CD8-positive, alpha-beta T cell (primary cell): ENCODE measurements at regions of chrX and their contacts with region 1.

Region 1: DNA sequence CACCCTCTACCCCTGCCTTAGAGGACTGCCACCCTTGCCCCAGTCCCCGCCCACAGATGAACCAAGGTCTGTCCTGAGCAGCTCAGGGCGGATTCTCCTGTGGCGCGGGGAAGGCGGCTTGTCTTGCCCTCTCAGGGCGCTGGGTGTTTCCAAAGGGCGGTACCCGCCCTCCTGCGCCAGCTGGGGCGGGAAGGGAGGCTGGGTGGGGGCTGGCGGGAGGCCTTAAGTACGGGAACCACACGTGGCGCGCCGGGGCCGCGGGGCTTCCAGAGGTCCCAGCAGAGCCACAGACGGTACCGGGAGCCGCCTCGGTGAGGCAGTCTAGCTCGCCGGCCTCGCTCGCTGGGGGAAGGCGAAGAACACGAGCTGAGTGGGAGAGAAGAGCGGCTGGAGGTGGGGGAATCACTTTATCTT is 361.1 kb downstream of the MID1IP1 start:
- DNase-seq: peak in 6 of 9 experiments; percentile 17 to 55 (median 46)
- ATAC-seq: peak; percentile 85
- H3K4me3 ChIP-seq: no peak overlapping the region
- H3K4me3 Mint-ChIP-seq: peak overlapping the region; percentile 67
- H3K27ac ChIP-seq: no peak overlapping the region
- H3K27ac Mint-ChIP-seq: no peak overlapping the region
- H3K4me1 ChIP-seq: no peaks in the 10 kb centered on the region
- H3K4me1 Mint-ChIP-seq: peaks cover 4% of the 10 kb centered on the region
- H3K27me3 ChIP-seq: peaks cover 0 to 3% of the 10 kb centered on the region in 2 experiments
- H3K27me3 Mint-ChIP-seq: peaks cover 3% of the 10 kb centered on the region
- CTCF ChIP-seq: peak; percentile 33

Region 2: DNA sequence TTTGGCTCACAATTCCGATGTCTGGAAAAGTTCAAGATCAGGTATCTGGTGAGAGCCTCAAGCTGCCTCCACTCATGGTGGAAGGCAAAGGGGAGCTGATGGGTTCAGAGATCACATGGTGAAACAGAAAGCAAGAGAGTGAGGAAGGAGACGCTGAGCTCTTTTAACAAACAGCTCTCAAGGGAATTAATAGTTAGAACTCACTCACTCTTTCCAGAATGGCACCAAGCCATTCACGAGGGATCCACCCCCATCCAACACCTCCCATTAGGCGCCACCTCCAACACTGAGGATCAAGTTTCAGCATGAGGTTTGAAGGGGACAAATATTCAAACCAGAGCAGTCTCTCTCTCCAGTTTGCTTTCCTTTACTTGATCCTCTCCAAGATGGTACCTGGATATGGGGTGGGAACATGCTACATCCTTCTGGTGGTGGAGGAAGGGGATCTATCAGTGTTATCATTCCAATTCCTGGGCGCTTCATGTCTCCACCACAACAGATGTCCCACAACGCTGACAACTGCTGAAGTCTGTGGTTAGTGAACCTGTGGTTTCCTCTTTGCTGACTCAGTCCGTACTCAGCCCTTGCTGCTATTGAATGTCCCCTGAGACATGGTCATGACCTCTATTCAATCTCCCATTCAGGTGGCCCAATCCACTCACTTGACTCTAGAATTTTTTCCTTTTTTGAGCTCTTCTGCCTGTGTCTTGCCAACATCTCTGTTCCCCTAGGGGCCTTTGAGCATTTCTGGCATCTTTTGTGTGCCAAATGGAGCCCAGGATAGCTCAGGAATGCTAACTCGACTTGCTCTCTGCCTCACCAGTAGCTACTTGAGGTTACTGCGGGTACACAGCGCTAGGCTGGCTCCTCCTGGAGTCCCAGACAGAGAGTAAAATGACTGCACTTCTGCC is 34.1 kb after region 1 on chrX:
- CTCF ChIA-PET with region 1: no interaction called
- POLR2A ChIA-PET with region 1: no interaction called
- intact Hi-C with region 1: loop called in 1 of 2 experiments (anchors 5 kb)
- DNase-seq: peak in 7 of 9 experiments; percentile 16 to 62 (median 44)
- ATAC-seq: peak; percentile 80
- H3K4me3 ChIP-seq: no peak overlapping the region
- H3K4me3 Mint-ChIP-seq: peak overlapping the region; percentile 37
- H3K27ac ChIP-seq: no peak overlapping the region
- H3K27ac Mint-ChIP-seq: peak overlapping the region; percentile 10
- H3K4me1 ChIP-seq: peaks cover 23% of the 10 kb centered on the region
- H3K4me1 Mint-ChIP-seq: peaks cover 26% of the 10 kb centered on the region
- H3K27me3 ChIP-seq: no peaks in the 10 kb centered on the region
- H3K27me3 Mint-ChIP-seq: peaks cover 4% of the 10 kb centered on the region
- CTCF ChIP-seq: no peak